ENCODE measurements at regions of chr2 and their contacts with region 1.

Region 1: DNA sequence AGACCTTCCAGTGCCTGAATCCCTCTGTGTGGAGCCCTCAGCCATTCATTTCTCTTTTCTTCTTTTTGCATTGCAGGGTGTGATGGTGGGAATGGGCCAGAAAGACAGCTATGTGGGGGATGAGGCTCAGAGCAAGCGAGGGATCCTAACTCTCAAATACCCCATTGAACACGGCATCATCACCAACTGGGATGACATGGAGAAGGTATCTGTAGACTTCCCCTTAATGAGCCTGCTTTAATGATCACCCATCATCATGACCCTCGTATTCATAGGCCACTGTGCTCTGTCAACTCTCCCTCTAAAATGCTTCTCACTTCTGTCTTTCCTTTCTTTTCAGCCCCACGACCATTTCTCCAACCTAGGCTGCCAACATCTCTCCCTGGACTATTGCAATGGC is 9.5 kb downstream of the ACTG2 start:
- DNase-seq: no peak
- ATAC-seq: no peak
- H3K4me3 Mint-ChIP-seq: no peak overlapping the region
- H3K27ac Mint-ChIP-seq: no peak overlapping the region
- H3K4me1 Mint-ChIP-seq: no peaks in the 10 kb centered on the region
- H3K27me3 Mint-ChIP-seq: peaks cover 6% of the 10 kb centered on the region
- CTCF ChIP-seq: no peak

Region 2: DNA sequence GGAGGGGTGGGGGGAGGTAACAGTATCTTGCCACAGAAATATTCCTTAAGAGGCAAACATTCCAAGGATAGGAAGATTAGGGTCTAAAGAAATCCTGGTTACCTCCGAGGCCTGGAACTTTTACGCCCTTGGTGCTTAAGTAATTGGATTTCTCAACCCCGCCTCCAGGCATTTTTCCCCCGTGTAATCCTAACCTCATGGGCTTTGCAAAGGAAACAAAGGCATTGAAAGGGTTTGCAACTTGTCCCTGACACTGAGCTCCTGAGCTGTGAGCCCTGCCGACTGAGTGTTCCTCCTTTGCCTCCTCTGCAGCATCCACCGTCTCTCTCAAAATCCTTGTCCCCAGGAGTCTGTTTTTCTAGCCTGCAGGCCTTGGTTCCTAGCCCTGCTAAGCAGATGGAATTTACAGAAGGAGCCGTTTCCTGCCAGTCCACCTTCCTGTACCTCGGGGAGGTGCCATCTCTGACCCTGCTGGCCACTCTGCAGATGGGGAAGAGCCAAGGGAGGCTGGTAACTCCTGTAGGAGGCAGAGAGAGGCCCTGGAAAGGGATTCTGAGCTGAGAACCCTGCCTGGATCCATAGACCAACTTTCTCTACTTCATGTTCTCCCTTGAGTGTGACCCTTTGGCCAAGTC is 106.6 kb after region 1 on chr2:
- CTCF ChIA-PET with region 1: no interaction called
- POLR2A ChIA-PET with region 1: interaction called, 10 read pairs
- intact Hi-C with region 1: no loop called
- DNase-seq: no peak
- ATAC-seq: no peak
- H3K4me3 Mint-ChIP-seq: no peak overlapping the region
- H3K27ac Mint-ChIP-seq: no peak overlapping the region
- H3K4me1 Mint-ChIP-seq: peaks cover 28% of the 10 kb centered on the region
- H3K27me3 Mint-ChIP-seq: no peaks in the 10 kb centered on the region
- CTCF ChIP-seq: no peak